Mammary epithelial cell (primary cell): ENCODE measurements at regions of chr14 and their contacts with region 1.

Region 1: GRCh38 chr14:90235179-90235976 is 21.0 kb upstream of the PSMC1 start:
- DNase-seq: peak; percentile 37
- H3K4me3 ChIP-seq: no peak overlapping the region
- H3K27ac ChIP-seq: no peak overlapping the region
- H3K4me1 ChIP-seq: peaks cover 4% of the 10 kb centered on the region
- H3K27me3 ChIP-seq: no peaks in the 10 kb centered on the region
- CTCF ChIP-seq: peak; percentile 83 to 92

Region 2: GRCh38 chr14:89027097-89027740 is 1208.2 kb before region 1 on chr14:
- CTCF ChIA-PET with region 1: no interaction called
- dilution Hi-C with region 1: no loop called
- in situ Hi-C with region 1: no loop called
- intact Hi-C with region 1: loop called (anchors 5 kb)
- DNase-seq: peak; percentile 36
- H3K4me3 ChIP-seq: peak overlapping the region; percentile 51 to 62 (median 52)
- H3K27ac ChIP-seq: no peak overlapping the region
- H3K4me1 ChIP-seq: peaks cover 6% of the 10 kb centered on the region
- H3K27me3 ChIP-seq: peaks cover 6% of the 10 kb centered on the region
- CTCF ChIP-seq: peak; percentile 36 to 72

Region 3: DNA sequence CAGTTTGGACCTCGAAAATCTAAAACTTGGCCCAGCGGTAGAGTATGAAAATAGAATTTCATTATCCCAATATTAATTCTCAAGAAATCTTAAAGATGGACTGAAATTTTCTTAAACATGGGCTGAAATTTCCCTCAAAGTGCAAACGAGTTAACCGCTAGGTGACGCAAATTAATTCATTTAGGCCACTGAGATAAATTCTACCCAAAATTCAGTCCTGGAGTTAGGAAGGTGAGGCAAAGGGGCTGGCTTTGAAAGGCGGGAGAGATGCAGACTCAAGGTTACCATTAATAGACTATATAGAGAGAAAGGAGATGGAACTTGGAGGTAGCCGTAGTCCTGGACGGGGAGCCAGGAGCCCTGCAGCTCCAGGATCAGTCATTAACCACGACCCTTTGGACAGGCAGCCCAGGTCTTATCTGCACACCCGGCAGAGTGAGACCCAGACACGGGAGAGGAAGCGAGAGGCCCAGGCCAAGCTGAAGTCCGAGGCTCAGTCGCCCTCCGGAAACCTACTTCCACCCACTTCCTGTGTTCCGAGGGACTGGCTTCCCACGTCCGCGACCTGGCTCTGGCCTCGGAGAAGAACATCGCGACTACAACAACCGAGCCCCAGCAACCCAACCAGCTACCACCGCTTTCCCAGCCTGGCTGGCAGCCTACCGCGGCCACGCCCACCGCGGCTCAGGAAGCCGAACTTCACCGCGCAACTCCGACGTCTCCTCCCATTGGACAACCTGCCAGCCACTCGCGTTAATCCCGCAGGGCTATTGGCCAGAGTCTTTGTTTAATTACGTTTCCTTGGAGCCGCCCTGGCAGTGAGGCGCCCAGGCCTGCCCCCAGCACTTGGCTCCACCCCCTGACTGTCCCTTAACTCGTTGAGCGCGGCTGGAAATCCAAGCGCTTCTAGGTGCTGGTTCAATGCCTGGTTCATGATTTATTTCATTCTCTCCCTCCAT is 281.0 kb before region 1 on chr14 and contains the start of gene EFCAB11:
- CTCF ChIA-PET with region 1: no interaction called
- dilution Hi-C with region 1: no loop called
- in situ Hi-C with region 1: no loop called
- intact Hi-C with region 1: loop called (anchors 1 kb)
- DNase-seq: peak; percentile 99
- H3K4me3 ChIP-seq: peak within 1 kb of the TSS; percentile 46 to 92 (median 69)
- H3K27ac ChIP-seq: peak within 1 kb of the TSS; percentile 88
- H3K4me1 ChIP-seq: peaks cover 25% of the 10 kb centered on the region
- H3K27me3 ChIP-seq: no peaks in the 10 kb centered on the region
- CTCF ChIP-seq: peak; percentile 18 to 30
- total RNA-seq, gene EFCAB11: 4.0 to 13.8 TPM

Region 4: DNA sequence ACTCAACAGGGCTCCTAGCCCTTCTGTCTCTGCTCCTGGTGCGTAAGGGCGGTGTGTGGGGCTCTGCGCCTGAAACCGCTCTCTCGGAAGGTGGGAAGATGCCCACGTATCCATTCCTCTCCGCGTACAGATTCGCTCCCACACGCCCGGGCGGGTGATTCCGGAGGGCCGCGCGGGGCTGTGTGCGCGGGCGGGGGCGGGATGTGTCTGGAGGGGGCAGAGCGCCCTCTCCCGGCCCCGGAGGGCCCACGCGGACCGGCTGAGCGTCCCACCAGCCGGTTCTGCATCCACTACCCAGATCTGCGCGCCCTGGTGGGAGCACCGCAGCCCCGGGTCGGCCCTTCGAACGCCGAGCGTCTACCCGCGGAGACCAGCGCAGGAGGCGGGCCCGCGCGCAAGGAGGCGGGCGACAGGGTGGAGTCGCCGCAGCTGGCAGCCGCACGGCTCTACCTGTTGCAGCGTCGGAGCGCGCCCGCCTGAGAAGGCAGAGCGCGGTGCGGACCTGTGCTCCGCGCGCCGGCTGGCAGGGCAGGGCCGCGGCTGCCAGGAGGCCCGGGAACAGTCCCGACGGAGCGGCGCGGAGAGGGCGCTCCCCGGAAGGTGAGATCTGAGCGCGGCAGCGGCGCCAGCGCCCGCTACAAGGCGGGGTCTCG is 174.9 kb before region 1 on chr14:
- CTCF ChIA-PET with region 1: no interaction called
- dilution Hi-C with region 1: no loop called
- in situ Hi-C with region 1: no loop called
- intact Hi-C with region 1: loop called (anchors 5 kb)
- DNase-seq: peak; percentile 67
- H3K4me3 ChIP-seq: peak overlapping the region; percentile 41 to 49 (median 44)
- H3K27ac ChIP-seq: no peak overlapping the region
- H3K4me1 ChIP-seq: peaks cover 24% of the 10 kb centered on the region
- H3K27me3 ChIP-seq: peaks cover 34% of the 10 kb centered on the region
- CTCF ChIP-seq: peak; percentile 22 to 55

Region 5: GRCh38 chr14:90177539-90178189 is 57.7 kb before region 1 on chr14:
- CTCF ChIA-PET with region 1: no interaction called
- dilution Hi-C with region 1: loop called (anchors 10 kb)
- in situ Hi-C with region 1: no loop called
- intact Hi-C with region 1: no loop called
- DNase-seq: no peak
- H3K4me3 ChIP-seq: no peak overlapping the region
- H3K27ac ChIP-seq: no peak overlapping the region
- H3K4me1 ChIP-seq: no peaks in the 10 kb centered on the region
- H3K27me3 ChIP-seq: no peaks in the 10 kb centered on the region
- CTCF ChIP-seq: no peak